ENCODE measurements at regions of chr1 and their contacts with region 1.

Region 1: DNA sequence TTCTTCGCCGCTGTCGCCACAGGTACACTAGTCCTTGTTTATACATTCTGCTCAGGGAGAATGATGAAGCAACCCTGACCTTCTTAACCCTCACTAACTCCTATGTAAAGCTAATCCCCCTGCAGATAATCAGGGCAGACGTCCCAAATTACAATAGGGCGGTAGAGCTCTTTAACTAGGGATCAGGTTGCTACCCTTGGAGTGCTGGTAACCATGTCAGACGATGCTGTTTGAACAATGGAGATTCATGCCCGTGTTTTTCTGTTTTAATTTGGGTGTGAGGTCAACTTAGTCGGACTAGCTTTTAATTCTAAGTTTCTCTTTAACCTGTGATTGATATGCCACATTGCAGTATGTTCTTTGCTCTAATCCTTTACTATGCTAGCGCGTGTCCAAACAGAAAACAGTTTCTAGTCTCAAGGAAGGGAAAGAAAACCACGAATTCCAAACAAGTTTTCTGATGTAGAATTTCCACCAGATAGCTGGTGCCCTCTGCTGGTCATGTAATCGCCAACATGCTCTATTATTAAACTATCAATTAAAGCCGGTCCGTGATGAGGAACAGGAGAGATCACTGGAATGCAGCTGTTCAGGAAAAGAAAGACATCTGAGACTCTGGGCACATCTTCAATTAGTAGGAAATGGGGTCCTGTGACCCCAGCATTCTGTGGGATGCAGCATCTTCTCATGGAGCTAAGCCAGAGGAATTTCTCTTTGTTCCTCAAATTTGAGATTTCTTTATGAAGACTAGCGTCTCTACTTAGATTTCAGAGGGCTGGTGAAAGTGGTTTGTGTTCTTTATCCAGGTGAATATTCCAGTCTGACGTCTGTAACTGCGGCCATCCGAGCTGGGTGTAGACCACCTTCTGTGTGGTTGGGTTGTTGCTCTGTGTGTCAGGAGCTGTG is 18.3 kb upstream of the VAMP3 start:
- DNase-seq: peak; percentile 42 to 53 (median 46)
- H3K4me3 ChIP-seq: no peak overlapping the region
- H3K4me3 Mint-ChIP-seq: peak overlapping the region in 6 of 8 donors; percentile 55 to 79 (median 62)
- H3K27ac ChIP-seq: no peak overlapping the region
- H3K27ac Mint-ChIP-seq: peak overlapping the region in 2 of 7 donors; percentile 38 to 73
- H3K4me1 ChIP-seq: peaks cover 34% of the 10 kb centered on the region
- H3K4me1 Mint-ChIP-seq: peaks cover 14 to 39% (median 21%) of the 10 kb centered on the region in 4 donors
- H3K27me3 ChIP-seq: no peaks in the 10 kb centered on the region
- H3K27me3 Mint-ChIP-seq: peaks cover 9 to 15% of the 10 kb centered on the region in 2 donors

Region 2: GRCh38 chr1:7501084-7501491 is 251.7 kb before region 1 on chr1:
- CTCF ChIA-PET with region 1: no interaction called
- POLR2A ChIA-PET with region 1: no interaction called
- intact Hi-C with region 1: no loop called
- DNase-seq: no peak
- H3K4me3 ChIP-seq: no peak overlapping the region
- H3K4me3 Mint-ChIP-seq: no peak overlapping the region
- H3K27ac ChIP-seq: no peak overlapping the region
- H3K27ac Mint-ChIP-seq: no peak overlapping the region
- H3K4me1 ChIP-seq: no peaks in the 10 kb centered on the region
- H3K4me1 Mint-ChIP-seq: no peaks in the 10 kb centered on the region
- H3K27me3 ChIP-seq: no peaks in the 10 kb centered on the region
- H3K27me3 Mint-ChIP-seq: no peaks in the 10 kb centered on the region

Region 3: DNA sequence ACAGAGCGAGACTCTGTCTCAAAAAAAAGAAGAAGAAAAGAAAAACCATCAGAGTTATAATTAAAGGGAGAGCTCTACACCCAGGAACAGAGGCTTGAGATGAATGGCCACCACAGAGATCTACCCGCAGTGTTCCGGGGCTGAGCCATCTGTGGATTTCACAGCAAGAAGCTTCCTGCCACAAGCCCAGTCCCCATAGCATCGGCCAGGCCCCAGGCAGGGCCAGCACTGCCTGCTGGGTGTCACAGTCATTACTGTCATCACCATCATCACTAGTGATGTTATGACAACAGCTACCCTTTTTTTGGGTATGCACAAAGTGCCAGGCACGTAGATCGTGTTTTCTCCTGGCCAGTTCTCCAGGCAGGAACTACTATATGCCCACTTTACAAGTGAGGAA is 93.3 kb before region 1 on chr1:
- CTCF ChIA-PET with region 1: interaction called, 468 read pairs
- POLR2A ChIA-PET with region 1: no interaction called
- intact Hi-C with region 1: no loop called
- DNase-seq: no peak
- H3K4me3 ChIP-seq: no peak overlapping the region
- H3K4me3 Mint-ChIP-seq: no peak overlapping the region
- H3K27ac ChIP-seq: no peak overlapping the region
- H3K27ac Mint-ChIP-seq: no peak overlapping the region
- H3K4me1 ChIP-seq: no peaks in the 10 kb centered on the region
- H3K4me1 Mint-ChIP-seq: no peaks in the 10 kb centered on the region
- H3K27me3 ChIP-seq: no peaks in the 10 kb centered on the region
- H3K27me3 Mint-ChIP-seq: peaks cover 0 to 2% of the 10 kb centered on the region in 2 donors

Region 4: GRCh38 chr1:7667625-7668218 is 85.0 kb before region 1 on chr1:
- CTCF ChIA-PET with region 1: interaction called, 468 read pairs
- POLR2A ChIA-PET with region 1: interaction called, 36 read pairs
- intact Hi-C with region 1: loop called (anchors 1 kb)
- DNase-seq: peak; percentile 72 to 81 (median 75)
- H3K4me3 ChIP-seq: no peak overlapping the region
- H3K4me3 Mint-ChIP-seq: no peak overlapping the region
- H3K27ac ChIP-seq: no peak overlapping the region
- H3K27ac Mint-ChIP-seq: peak overlapping the region in 3 of 7 donors; percentile 61 to 70 (median 63)
- H3K4me1 ChIP-seq: peaks cover 5% of the 10 kb centered on the region
- H3K4me1 Mint-ChIP-seq: peaks cover 0 to 6% (median 4%) of the 10 kb centered on the region in 4 donors
- H3K27me3 ChIP-seq: no peaks in the 10 kb centered on the region
- H3K27me3 Mint-ChIP-seq: no peaks in the 10 kb centered on the region

Region 5: GRCh38 chr1:7680207-7680954 is 72.4 kb before region 1 on chr1:
- CTCF ChIA-PET with region 1: interaction called, 468 read pairs
- POLR2A ChIA-PET with region 1: interaction called, 8 read pairs
- intact Hi-C with region 1: no loop called
- DNase-seq: peak in 4 of 5 donors; percentile 48 to 55 (median 50)
- H3K4me3 ChIP-seq: peak overlapping the region; percentile 42 to 66
- H3K4me3 Mint-ChIP-seq: peak overlapping the region; percentile 74 to 88 (median 80)
- H3K27ac ChIP-seq: peak overlapping the region; percentile 31
- H3K27ac Mint-ChIP-seq: peak overlapping the region in 1 of 7 donors; percentile 42
- H3K4me1 ChIP-seq: peaks cover 9% of the 10 kb centered on the region
- H3K4me1 Mint-ChIP-seq: peaks cover 0 to 1% (median 0%) of the 10 kb centered on the region in 4 donors
- H3K27me3 ChIP-seq: no peaks in the 10 kb centered on the region
- H3K27me3 Mint-ChIP-seq: peaks cover 0 to 5% of the 10 kb centered on the region in 2 donors

Region 6: DNA sequence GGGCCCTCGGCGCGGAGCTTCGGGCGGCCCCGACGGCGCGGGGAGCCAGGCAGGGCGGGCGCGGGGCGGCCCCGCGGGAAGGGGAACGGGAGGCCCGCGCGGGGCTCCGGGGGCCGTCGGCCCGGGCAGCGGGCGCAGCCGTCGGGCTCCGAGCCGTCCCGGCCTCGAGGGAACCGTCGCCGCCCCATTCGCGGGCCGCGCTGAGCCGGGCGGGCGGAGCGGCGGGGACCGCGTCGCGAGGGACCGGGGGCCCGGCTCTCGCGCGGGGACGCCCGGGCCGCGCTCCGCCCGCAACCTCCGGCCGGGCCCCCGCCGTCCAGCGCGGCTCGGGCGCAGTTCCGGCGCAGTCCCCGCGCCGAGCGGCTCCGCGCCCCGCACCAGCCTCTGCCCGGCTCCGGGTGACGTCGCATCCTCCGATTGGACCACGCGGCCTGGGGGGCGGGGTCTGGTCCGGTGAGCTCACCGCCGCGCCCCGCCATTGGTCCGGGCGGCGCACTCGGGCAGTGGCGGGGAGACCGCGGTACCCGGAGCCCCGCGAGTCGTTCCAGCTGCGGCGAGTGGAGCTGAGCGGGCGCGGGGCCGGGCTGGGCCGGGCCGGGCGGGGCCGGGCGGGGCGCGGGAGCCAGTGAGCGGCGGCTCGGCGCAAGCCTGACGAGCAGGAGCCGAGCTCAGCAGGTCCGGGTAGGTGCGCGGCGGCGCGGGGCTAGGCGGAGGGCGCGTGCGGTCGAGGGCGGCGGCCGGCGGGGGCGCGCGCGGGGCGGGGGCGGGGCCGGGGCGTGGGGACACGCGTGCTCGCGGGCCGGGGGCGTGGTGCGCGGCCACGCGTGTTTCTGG is 48.3 kb before region 1 on chr1:
- CTCF ChIA-PET with region 1: interaction called, 12 read pairs
- POLR2A ChIA-PET with region 1: interaction called, 22 read pairs
- intact Hi-C with region 1: loop called (anchors 2 kb)
- DNase-seq: peak; percentile 89 to 92 (median 91)
- H3K4me3 ChIP-seq: peak overlapping the region in 1 of 2 donors; percentile 54
- H3K4me3 Mint-ChIP-seq: peak overlapping the region in 6 of 8 donors; percentile 87 to 90 (median 89)
- H3K27ac ChIP-seq: no peak overlapping the region
- H3K27ac Mint-ChIP-seq: peak overlapping the region in 2 of 7 donors; percentile 86 to 93
- H3K4me1 ChIP-seq: peaks cover 8% of the 10 kb centered on the region
- H3K4me1 Mint-ChIP-seq: peaks cover 8 to 38% (median 20%) of the 10 kb centered on the region in 4 donors
- H3K27me3 ChIP-seq: peaks cover 13% of the 10 kb centered on the region
- H3K27me3 Mint-ChIP-seq: peaks cover 16 to 30% of the 10 kb centered on the region in 2 donors

Region 7: DNA sequence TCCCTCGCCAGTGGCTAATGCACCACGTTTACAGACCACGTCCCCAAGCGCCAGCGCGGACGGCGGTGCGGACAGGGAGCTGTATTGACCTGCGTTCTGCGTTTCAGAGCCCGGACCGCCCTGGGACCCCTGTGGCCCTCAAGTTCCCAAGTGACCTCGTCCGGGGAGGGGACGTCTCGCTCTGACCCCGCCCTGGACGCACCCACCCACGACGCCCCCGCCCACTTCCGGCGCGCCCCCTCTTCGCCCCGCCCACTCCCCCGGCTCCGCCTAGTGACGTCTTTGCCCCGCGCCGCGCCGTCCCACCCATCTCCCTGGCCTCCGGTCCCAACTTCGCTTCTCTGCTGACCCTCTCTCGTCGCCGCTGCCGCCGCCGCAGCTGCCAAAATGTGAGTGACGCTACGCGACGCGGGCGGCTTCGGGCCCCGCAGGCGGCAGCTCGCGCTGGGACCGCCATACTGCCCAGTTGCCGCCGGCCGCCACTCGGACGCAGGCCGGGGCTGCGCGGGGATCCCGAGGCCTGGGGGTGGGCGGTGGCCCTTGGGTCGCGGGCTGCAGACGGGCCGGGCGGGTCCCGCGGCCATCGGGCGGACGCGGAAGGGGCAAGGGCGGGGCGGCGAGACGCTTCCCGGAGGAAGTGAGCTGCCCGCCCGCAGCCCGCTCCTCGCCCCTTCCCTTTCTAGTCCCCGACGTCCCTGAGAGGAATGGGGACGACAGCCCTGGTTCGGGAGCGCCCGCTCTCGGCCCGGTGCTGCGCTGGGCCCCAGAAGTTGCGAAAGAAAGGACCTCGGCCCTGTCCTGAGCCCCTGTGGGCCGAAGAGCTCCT is 18.4 kb after region 1 on chr1 and contains the start of gene VAMP3:
- CTCF ChIA-PET with region 1: interaction called, 26 read pairs
- POLR2A ChIA-PET with region 1: interaction called, 5 read pairs
- intact Hi-C with region 1: no loop called
- DNase-seq: peak; percentile 75 to 80 (median 76)
- H3K4me3 ChIP-seq: peak within 1 kb of the TSS; percentile 32 to 80
- H3K4me3 Mint-ChIP-seq: peak within 1 kb of the TSS; percentile 86 to 93 (median 90)
- H3K27ac ChIP-seq: peak within 1 kb of the TSS; percentile 80
- H3K27ac Mint-ChIP-seq: peak within 1 kb of the TSS; percentile 82 to 92 (median 90)
- H3K4me1 ChIP-seq: peaks cover 18% of the 10 kb centered on the region
- H3K4me1 Mint-ChIP-seq: peaks cover 20 to 45% (median 35%) of the 10 kb centered on the region in 4 donors
- H3K27me3 ChIP-seq: no peaks in the 10 kb centered on the region
- H3K27me3 Mint-ChIP-seq: peaks cover 3 to 6% of the 10 kb centered on the region in 2 donors
- total RNA-seq, gene VAMP3: 53.3 to 67.0 TPM

Region 8: GRCh38 chr1:7885513-7886404 is 133.0 kb after region 1 on chr1:
- CTCF ChIA-PET with region 1: no interaction called
- POLR2A ChIA-PET with region 1: no interaction called
- intact Hi-C with region 1: no loop called
- DNase-seq: peak in 1 of 5 donors; percentile 38
- H3K4me3 ChIP-seq: no peak overlapping the region
- H3K4me3 Mint-ChIP-seq: no peak overlapping the region
- H3K27ac ChIP-seq: no peak overlapping the region
- H3K27ac Mint-ChIP-seq: no peak overlapping the region
- H3K4me1 ChIP-seq: no peaks in the 10 kb centered on the region
- H3K4me1 Mint-ChIP-seq: peaks cover 0 to 2% (median 0%) of the 10 kb centered on the region in 4 donors
- H3K27me3 ChIP-seq: no peaks in the 10 kb centered on the region
- H3K27me3 Mint-ChIP-seq: peaks cover 17 to 18% of the 10 kb centered on the region in 2 donors

Region 9: DNA sequence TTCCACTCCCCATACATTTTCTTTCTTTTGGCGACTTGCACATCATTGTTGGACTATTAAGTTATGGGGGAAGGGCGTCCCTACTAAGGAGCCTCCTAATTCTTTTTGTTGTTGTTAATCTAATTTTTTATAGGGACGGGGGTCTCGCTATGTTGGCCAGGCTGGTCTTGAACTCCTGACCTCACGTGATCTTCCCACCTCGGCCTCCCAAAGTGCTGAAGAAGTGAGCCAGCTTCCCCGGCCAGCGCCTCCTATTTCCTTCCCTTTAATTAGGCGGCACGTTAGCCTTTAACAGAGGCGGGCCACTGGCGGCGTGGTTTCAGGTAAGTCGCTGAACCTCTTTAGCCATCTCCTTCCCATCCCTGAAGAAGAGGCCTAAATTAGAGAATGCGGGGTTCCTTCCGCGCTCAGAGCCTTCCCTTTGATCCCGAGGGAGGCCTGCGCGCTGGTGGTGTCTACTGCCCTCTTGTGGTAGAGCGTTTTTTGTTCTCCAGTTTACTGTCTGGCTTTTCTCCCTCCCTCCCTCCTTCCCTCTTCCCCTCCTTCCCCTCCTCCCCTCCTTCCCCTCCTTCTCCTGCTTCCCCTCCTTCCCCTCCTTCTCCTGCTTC is 149.8 kb after region 1 on chr1:
- CTCF ChIA-PET with region 1: no interaction called
- POLR2A ChIA-PET with region 1: no interaction called
- intact Hi-C with region 1: loop called (anchors 5 kb)
- DNase-seq: peak; percentile 51 to 58 (median 55)
- H3K4me3 ChIP-seq: no peak overlapping the region
- H3K4me3 Mint-ChIP-seq: peak overlapping the region; percentile 57 to 76 (median 70)
- H3K27ac ChIP-seq: no peak overlapping the region
- H3K27ac Mint-ChIP-seq: no peak overlapping the region
- H3K4me1 ChIP-seq: no peaks in the 10 kb centered on the region
- H3K4me1 Mint-ChIP-seq: peaks cover 0 to 13% (median 2%) of the 10 kb centered on the region in 4 donors
- H3K27me3 ChIP-seq: no peaks in the 10 kb centered on the region
- H3K27me3 Mint-ChIP-seq: no peaks in the 10 kb centered on the region

Measured in CD4-positive, alpha-beta memory T cell (primary cell).